Psoas muscle (tissue), 8 donors: ENCODE measurements at regions of chr7 and their contacts with region 1.

Region 1: GRCh38 chr7:114364151-114364550 is 50.5 kb upstream of the FOXP2 start:
- DNase-seq: no peak
- ATAC-seq: peak; percentile 70 to 91 (median 84)
- H3K4me3 ChIP-seq: no peak overlapping the region
- H3K27ac ChIP-seq: peak overlapping the region; percentile 5
- H3K4me1 ChIP-seq: peaks cover 11% of the 10 kb centered on the region
- H3K27me3 ChIP-seq: no peaks in the 10 kb centered on the region
- CTCF ChIP-seq: no peak

Region 2: GRCh38 chr7:113561446-113561845 is 802.7 kb before region 1 on chr7:
- intact Hi-C with region 1: no loop called
- DNase-seq: no peak
- ATAC-seq: peak in 1 of 4 donors; percentile 37
- H3K4me3 ChIP-seq: no peak overlapping the region
- H3K27ac ChIP-seq: no peak overlapping the region
- H3K4me1 ChIP-seq: peaks cover 7% of the 10 kb centered on the region
- H3K27me3 ChIP-seq: no peaks in the 10 kb centered on the region
- CTCF ChIP-seq: no peak

Region 3: GRCh38 chr7:114148779-114149178 is 215.4 kb before region 1 on chr7:
- intact Hi-C with region 1: no loop called
- DNase-seq: no peak
- ATAC-seq: no peak
- H3K4me3 ChIP-seq: no peak overlapping the region
- H3K27ac ChIP-seq: no peak overlapping the region
- H3K4me1 ChIP-seq: peaks cover under 1% of the 10 kb centered on the region
- H3K27me3 ChIP-seq: no peaks in the 10 kb centered on the region
- CTCF ChIP-seq: no peak

Region 4: DNA sequence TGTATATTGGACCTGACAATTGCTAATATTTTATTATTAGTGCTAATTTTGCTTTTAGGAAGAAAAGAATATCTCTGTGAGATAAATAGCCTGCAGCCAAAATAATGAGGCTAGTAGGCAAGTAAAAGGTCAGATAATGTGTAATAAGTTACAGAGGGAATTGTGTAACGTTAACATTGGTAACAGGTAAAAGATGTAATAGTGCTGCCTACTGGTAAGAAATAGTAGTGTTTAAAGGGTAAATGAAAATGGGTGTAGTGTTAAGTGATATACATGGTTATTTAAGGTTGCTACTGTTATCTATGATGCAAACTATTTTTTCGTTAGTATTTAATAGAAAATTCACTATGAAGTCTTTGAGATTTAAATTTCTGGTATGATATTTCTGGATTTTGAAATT is 41.3 kb after region 1 on chr7:
- intact Hi-C with region 1: loop called in 1 of 2 experiments (anchors 5 kb)
- DNase-seq: no peak
- ATAC-seq: peak; percentile 65 to 84 (median 77)
- H3K4me3 ChIP-seq: no peak overlapping the region
- H3K27ac ChIP-seq: no peak overlapping the region
- H3K4me1 ChIP-seq: no peaks in the 10 kb centered on the region
- H3K27me3 ChIP-seq: no peaks in the 10 kb centered on the region
- CTCF ChIP-seq: peak; percentile 52

Region 5: GRCh38 chr7:114416129-114416990 is 52.2 kb after region 1 on chr7:
- intact Hi-C with region 1: no loop called
- DNase-seq: no peak
- ATAC-seq: peak; percentile 68 to 82 (median 79)
- H3K4me3 ChIP-seq: peak overlapping the region; percentile 57
- H3K27ac ChIP-seq: peak overlapping the region; percentile 88
- H3K4me1 ChIP-seq: peaks cover 32% of the 10 kb centered on the region
- H3K27me3 ChIP-seq: no peaks in the 10 kb centered on the region
- CTCF ChIP-seq: no peak